ENCODE measurements at regions of chr14 and their contacts with region 1.

Region 1: DNA sequence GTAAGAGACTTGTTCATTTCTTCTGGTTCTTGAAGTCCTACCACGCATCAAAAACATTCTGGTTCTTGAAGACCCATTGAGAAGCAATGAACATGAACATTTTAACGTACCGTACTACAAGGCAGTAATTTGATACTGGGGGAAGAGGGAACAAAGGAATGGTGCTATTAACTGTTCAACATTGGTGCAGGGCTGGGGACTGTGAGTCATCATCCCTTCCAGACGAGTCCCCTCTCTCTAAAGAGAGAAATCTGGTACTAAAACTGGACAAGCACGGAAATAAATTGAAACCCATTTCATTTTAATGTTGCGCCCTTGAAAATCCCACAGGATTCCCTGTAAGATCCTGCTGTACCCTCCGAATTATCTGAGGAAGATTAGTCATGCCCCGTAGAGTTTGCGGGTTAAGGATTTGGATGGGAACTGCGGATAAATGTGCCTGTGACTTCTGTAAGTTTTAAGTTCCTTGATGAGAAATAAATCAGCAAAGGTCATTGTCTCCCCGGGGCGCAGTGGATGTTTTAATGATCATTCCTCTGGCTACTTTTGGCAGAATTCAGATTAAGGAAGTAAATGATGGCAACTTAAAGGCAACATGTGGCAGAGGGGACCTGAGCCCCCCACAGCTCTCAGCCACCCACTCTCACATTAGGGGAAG is 78.6 kb downstream of the KCNK13 start:
- DNase-seq: peak; percentile 62
- H3K4me3 ChIP-seq: no peak overlapping the region
- H3K27ac ChIP-seq: peak overlapping the region; percentile 93
- H3K4me1 ChIP-seq: peaks cover 34% of the 10 kb centered on the region
- H3K27me3 ChIP-seq: peaks cover 2 to 5% of the 10 kb centered on the region in 2 experiments
- CTCF ChIP-seq: no peak
- POLR2A ChIP-seq: no peak

Region 2: GRCh38 chr14:90039253-90040010 is 101.0 kb before region 1 on chr14:
- CTCF ChIA-PET with region 1: no interaction called
- POLR2A ChIA-PET with region 1: no interaction called
- dilution Hi-C with region 1: no loop called
- intact Hi-C with region 1: no loop called
- DNase-seq: no peak
- H3K4me3 ChIP-seq: no peak overlapping the region
- H3K27ac ChIP-seq: no peak overlapping the region
- H3K4me1 ChIP-seq: no peaks in the 10 kb centered on the region
- H3K27me3 ChIP-seq: no peaks in the 10 kb centered on the region
- CTCF ChIP-seq: no peak
- POLR2A ChIP-seq: no peak

Region 3: DNA sequence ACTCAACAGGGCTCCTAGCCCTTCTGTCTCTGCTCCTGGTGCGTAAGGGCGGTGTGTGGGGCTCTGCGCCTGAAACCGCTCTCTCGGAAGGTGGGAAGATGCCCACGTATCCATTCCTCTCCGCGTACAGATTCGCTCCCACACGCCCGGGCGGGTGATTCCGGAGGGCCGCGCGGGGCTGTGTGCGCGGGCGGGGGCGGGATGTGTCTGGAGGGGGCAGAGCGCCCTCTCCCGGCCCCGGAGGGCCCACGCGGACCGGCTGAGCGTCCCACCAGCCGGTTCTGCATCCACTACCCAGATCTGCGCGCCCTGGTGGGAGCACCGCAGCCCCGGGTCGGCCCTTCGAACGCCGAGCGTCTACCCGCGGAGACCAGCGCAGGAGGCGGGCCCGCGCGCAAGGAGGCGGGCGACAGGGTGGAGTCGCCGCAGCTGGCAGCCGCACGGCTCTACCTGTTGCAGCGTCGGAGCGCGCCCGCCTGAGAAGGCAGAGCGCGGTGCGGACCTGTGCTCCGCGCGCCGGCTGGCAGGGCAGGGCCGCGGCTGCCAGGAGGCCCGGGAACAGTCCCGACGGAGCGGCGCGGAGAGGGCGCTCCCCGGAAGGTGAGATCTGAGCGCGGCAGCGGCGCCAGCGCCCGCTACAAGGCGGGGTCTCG is 80.0 kb before region 1 on chr14:
- CTCF ChIA-PET with region 1: interaction called, 3 read pairs
- POLR2A ChIA-PET with region 1: no interaction called
- dilution Hi-C with region 1: no loop called
- intact Hi-C with region 1: loop called (anchors 2 kb)
- DNase-seq: peak; percentile 54
- H3K4me3 ChIP-seq: peak overlapping the region; percentile 20 to 53 (median 46)
- H3K27ac ChIP-seq: no peak overlapping the region
- H3K4me1 ChIP-seq: peaks cover 27% of the 10 kb centered on the region
- H3K27me3 ChIP-seq: peaks cover 51 to 75% of the 10 kb centered on the region in 2 experiments
- CTCF ChIP-seq: peak; percentile 52 to 72
- POLR2A ChIP-seq: no peak

Region 4: GRCh38 chr14:90109646-90110257 is 30.7 kb before region 1 on chr14:
- CTCF ChIA-PET with region 1: no interaction called
- POLR2A ChIA-PET with region 1: no interaction called
- dilution Hi-C with region 1: no loop called
- intact Hi-C with region 1: no loop called
- DNase-seq: no peak
- H3K4me3 ChIP-seq: no peak overlapping the region
- H3K27ac ChIP-seq: no peak overlapping the region
- H3K4me1 ChIP-seq: no peaks in the 10 kb centered on the region
- H3K27me3 ChIP-seq: peaks cover 0 to 2% of the 10 kb centered on the region in 2 experiments
- CTCF ChIP-seq: peak in 1 of 2 donors; percentile 21
- POLR2A ChIP-seq: no peak